Tibial artery (tissue), 4 donors: ENCODE measurements at regions of chr1 and their contacts with region 1.

Region 1: GRCh38 chr1:36285448-36286101 is 20.6 kb upstream of the SH3D21 start:
- DNase-seq: peak in 1 of 2 donors; percentile 77
- H3K4me3 ChIP-seq: no peak overlapping the region
- H3K27ac ChIP-seq: peak overlapping the region in 1 of 2 donors; percentile 22
- H3K4me1 ChIP-seq: peaks cover 0 to 28% (median 9%) of the 10 kb centered on the region in 4 donors
- H3K27me3 ChIP-seq: no peaks in the 10 kb centered on the region
- CTCF ChIP-seq: peak; percentile 71 to 78

Region 2: DNA sequence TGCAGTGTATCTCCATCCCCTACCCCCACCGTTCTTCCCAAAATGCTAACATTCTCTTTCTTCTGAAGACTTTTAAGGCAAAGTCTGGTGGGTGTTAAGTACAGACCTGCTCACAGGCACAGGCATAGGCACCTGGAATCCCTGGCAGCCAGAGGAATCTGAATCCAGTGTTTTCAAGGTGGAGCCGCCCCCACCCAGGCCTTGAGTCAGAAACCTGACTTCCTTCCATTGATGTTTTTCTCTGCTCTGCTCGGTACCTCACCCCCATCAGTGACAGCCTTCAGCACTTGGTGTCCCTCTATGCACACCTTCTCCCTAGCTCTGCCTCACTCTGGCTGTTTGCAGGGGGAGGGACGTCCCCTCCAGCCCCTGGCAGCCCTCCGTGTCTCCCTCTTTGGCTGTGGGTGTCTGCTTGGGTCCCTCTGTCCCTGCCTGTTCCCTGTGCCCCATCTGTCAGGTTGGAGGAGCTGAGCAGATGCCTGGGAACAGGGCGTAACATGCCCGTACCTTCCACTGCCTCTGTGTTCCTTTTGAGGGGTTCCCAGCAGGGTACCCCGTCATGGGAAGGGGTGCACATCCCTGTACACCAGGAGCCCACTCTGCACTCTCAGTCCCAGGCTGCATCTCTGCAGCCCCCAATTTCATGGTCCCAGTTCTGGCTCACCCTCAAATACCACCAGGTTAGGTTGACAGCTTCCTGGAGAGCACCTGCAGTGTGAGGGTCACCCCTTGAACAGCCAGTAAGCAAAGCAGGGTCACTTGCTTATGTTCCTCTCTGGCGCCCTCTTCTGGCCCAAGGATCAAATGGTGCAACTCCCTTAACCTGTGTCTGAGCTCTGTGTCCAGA is 721.3 kb before region 1 on chr1:
- intact Hi-C with region 1: loop called (anchors 5 kb)
- DNase-seq: peak; percentile 83
- H3K4me3 ChIP-seq: no peak overlapping the region
- H3K27ac ChIP-seq: no peak overlapping the region
- H3K4me1 ChIP-seq: peaks cover 3 to 29% (median 15%) of the 10 kb centered on the region in 4 donors
- H3K27me3 ChIP-seq: peaks cover 0 to 10% of the 10 kb centered on the region in 2 donors
- CTCF ChIP-seq: peak; percentile 63 to 71

Region 3: GRCh38 chr1:36099681-36100341 is 185.8 kb before region 1 on chr1:
- intact Hi-C with region 1: loop called (anchors 5 kb)
- DNase-seq: peak; percentile 73 to 84
- H3K4me3 ChIP-seq: no peak overlapping the region
- H3K27ac ChIP-seq: peak overlapping the region; percentile 50 to 65
- H3K4me1 ChIP-seq: peaks cover 0 to 23% (median 13%) of the 10 kb centered on the region in 4 donors
- H3K27me3 ChIP-seq: no peaks in the 10 kb centered on the region
- CTCF ChIP-seq: peak; percentile 71 to 93

Region 4: DNA sequence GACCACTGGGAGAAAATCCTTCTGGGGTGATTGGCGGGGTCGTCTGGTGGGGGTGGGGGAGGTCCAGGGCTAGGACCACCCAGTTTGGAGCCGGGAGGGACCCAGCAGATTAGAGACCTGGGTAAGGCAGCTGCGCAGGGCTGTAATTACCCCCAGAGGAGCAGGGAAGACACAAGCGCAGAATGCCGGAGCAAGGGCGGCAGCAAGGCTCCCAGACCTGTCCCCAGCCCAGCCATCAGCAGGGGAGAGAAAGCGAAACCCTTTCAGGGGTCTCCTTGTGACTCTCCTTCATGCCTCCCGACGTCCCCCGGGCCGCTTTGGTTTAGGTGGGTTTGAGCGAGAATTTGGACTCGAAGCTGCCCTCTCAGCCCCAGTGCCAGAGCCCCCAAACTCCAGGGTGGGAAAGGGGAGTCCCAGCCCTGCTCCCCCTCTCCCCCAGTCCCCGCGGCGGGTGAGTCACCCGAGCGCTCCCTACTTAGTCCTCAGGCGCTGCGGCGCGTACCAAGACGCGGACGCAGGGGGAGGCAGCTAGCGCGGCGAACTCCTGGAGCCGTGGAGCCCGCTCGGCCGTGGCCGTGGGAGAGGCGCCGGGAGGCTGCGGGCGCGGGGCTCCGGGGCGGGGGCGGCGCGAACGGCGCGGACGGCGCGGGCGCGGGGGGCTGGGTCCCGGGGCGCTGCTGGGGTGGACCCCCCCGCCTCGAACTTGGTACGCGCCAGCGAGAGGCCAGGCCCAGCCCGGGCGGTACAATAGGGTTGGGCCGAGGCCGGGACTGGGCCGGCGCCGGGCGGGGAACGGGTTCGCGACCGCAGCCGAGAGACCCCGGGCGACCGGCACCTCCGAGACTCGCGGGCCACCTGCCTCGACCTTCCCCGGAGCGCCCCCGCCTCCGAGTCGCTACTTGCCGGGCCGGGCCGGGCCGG is 129.9 kb before region 1 on chr1 and contains the start of gene MAP7D1:
- intact Hi-C with region 1: loop called (anchors 5 kb)
- DNase-seq: peak; percentile 88 to 94
- H3K4me3 ChIP-seq: peak within 1 kb of the TSS; percentile 99 to 100
- H3K27ac ChIP-seq: peak within 1 kb of the TSS; percentile 99 to 100
- H3K4me1 ChIP-seq: peaks cover 4 to 72% (median 57%) of the 10 kb centered on the region in 4 donors
- H3K27me3 ChIP-seq: no peaks in the 10 kb centered on the region
- CTCF ChIP-seq: no peak

Region 5: GRCh38 chr1:36187800-36188593 is 97.6 kb before region 1 on chr1:
- intact Hi-C with region 1: loop called (anchors 10 kb)
- DNase-seq: peak; percentile 91 to 94
- H3K4me3 ChIP-seq: no peak overlapping the region
- H3K27ac ChIP-seq: peak overlapping the region; percentile 83 to 85
- H3K4me1 ChIP-seq: peaks cover 4 to 27% (median 13%) of the 10 kb centered on the region in 4 donors
- H3K27me3 ChIP-seq: no peaks in the 10 kb centered on the region
- CTCF ChIP-seq: peak; percentile 86 to 97

Region 6: GRCh38 chr1:36223993-36224536 is 61.5 kb before region 1 on chr1 and contains the start of gene THRAP3:
- intact Hi-C with region 1: loop called (anchors 10 kb)
- DNase-seq: peak; percentile 99 to 100
- H3K4me3 ChIP-seq: peak within 1 kb of the TSS; percentile 81 to 87
- H3K27ac ChIP-seq: peak within 1 kb of the TSS; percentile 97 to 98
- H3K4me1 ChIP-seq: peaks cover 0 to 49% (median 39%) of the 10 kb centered on the region in 4 donors
- H3K27me3 ChIP-seq: no peaks in the 10 kb centered on the region
- CTCF ChIP-seq: no peak

Region 7: DNA sequence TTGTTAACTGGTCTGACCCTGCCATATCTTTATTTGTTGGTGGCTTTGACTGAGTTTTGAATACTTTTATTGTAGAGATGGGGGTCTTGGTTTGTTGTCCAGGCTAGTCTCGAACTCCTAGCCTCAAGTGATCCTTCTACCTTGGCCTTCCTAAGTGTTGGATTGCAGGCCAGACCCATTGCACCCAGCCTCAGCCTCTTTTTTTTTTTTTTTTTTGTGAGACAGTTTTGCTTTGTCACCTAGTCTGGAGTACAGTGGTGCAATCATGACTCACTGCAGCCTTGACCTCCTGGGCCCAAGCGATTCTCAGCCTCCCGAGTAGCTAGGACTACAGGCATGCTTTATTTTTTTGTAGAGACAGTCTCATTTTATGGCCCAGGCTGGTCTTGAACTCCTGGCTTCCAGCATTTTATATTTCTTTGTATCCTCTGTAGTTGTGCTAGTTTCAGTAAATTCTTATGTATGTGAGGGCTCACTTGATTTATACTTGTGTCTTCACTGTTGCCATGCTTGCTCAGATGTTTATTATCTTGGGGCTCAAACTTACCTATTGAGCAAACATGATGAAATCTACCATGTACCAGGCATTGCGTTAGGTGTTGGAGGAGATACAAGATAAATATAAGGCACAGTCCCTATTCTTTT is 37.2 kb before region 1 on chr1:
- intact Hi-C with region 1: no loop called
- DNase-seq: peak; percentile 81 to 90
- H3K4me3 ChIP-seq: no peak overlapping the region
- H3K27ac ChIP-seq: peak overlapping the region; percentile 75 to 81
- H3K4me1 ChIP-seq: peaks cover 0 to 98% (median 42%) of the 10 kb centered on the region in 4 donors
- H3K27me3 ChIP-seq: no peaks in the 10 kb centered on the region
- CTCF ChIP-seq: no peak